ENCODE measurements at regions of chr20 and their contacts with region 1.

Region 1: GRCh38 chr20:59120491-59120890 is 43.1 kb upstream of the ZNF831 start:
- DNase-seq: peak in 6 of 9 experiments; percentile 16 to 82 (median 42)
- ATAC-seq: no peak
- H3K4me3 ChIP-seq: no peak overlapping the region
- H3K4me3 Mint-ChIP-seq: peak overlapping the region; percentile 61
- H3K27ac ChIP-seq: peak overlapping the region; percentile 77 to 87
- H3K27ac Mint-ChIP-seq: peak overlapping the region; percentile 98
- H3K4me1 ChIP-seq: peaks cover 84% of the 10 kb centered on the region
- H3K4me1 Mint-ChIP-seq: peaks cover 89% of the 10 kb centered on the region
- H3K27me3 ChIP-seq: no peaks in the 10 kb centered on the region
- H3K27me3 Mint-ChIP-seq: no peaks in the 10 kb centered on the region
- CTCF ChIP-seq: no peak

Region 2: GRCh38 chr20:58431134-58431533 is 689.4 kb before region 1 on chr20:
- CTCF ChIA-PET with region 1: no interaction called
- POLR2A ChIA-PET with region 1: no interaction called
- intact Hi-C with region 1: no loop called
- DNase-seq: no peak
- ATAC-seq: no peak
- H3K4me3 ChIP-seq: no peak overlapping the region
- H3K4me3 Mint-ChIP-seq: no peak overlapping the region
- H3K27ac ChIP-seq: no peak overlapping the region
- H3K27ac Mint-ChIP-seq: no peak overlapping the region
- H3K4me1 ChIP-seq: peaks cover 12% of the 10 kb centered on the region
- H3K4me1 Mint-ChIP-seq: peaks cover 44% of the 10 kb centered on the region
- H3K27me3 ChIP-seq: no peaks in the 10 kb centered on the region
- H3K27me3 Mint-ChIP-seq: no peaks in the 10 kb centered on the region
- CTCF ChIP-seq: no peak

Region 3: GRCh38 chr20:58584881-58585752 is 535.4 kb before region 1 on chr20:
- CTCF ChIA-PET with region 1: no interaction called
- POLR2A ChIA-PET with region 1: no interaction called
- intact Hi-C with region 1: no loop called
- DNase-seq: no peak
- ATAC-seq: no peak
- H3K4me3 ChIP-seq: no peak overlapping the region
- H3K4me3 Mint-ChIP-seq: no peak overlapping the region
- H3K27ac ChIP-seq: no peak overlapping the region
- H3K27ac Mint-ChIP-seq: no peak overlapping the region
- H3K4me1 ChIP-seq: no peaks in the 10 kb centered on the region
- H3K4me1 Mint-ChIP-seq: no peaks in the 10 kb centered on the region
- H3K27me3 ChIP-seq: no peaks in the 10 kb centered on the region
- H3K27me3 Mint-ChIP-seq: peaks cover 17% of the 10 kb centered on the region
- CTCF ChIP-seq: no peak

Region 4: DNA sequence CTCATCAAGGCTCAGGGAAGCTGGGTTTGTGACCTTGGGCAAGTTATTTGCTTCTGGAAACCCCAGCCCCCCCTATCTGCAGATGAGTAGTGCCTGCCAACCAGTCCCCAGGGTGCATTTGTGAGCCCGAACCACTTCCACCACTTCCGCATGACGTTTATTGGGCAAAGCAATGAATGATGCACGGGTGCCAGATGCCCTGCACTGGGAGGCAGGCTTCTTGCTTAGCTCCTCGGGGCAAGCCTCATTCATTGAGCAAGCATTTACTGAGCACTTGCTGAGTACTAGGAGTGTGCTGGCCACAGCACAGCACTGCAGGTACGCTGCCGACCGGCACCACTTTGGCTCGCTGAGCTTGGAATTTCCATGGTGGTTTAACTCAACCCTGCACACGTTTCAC is 330.0 kb before region 1 on chr20:
- CTCF ChIA-PET with region 1: no interaction called
- POLR2A ChIA-PET with region 1: no interaction called
- intact Hi-C with region 1: no loop called
- DNase-seq: peak in 1 of 9 experiments; percentile 7
- ATAC-seq: no peak
- H3K4me3 ChIP-seq: no peak overlapping the region
- H3K4me3 Mint-ChIP-seq: no peak overlapping the region
- H3K27ac ChIP-seq: no peak overlapping the region
- H3K27ac Mint-ChIP-seq: no peak overlapping the region
- H3K4me1 ChIP-seq: no peaks in the 10 kb centered on the region
- H3K4me1 Mint-ChIP-seq: no peaks in the 10 kb centered on the region
- H3K27me3 ChIP-seq: no peaks in the 10 kb centered on the region
- H3K27me3 Mint-ChIP-seq: peaks cover 6% of the 10 kb centered on the region
- CTCF ChIP-seq: no peak

Region 5: GRCh38 chr20:59141787-59142581 is 21.5 kb after region 1 on chr20:
- CTCF ChIA-PET with region 1: interaction called, 8 read pairs
- POLR2A ChIA-PET with region 1: interaction called, 32 read pairs
- intact Hi-C with region 1: loop called (anchors 1 to 2 kb)
- DNase-seq: peak in 1 of 9 experiments; percentile 30
- ATAC-seq: no peak
- H3K4me3 ChIP-seq: no peak overlapping the region
- H3K4me3 Mint-ChIP-seq: no peak overlapping the region
- H3K27ac ChIP-seq: no peak overlapping the region
- H3K27ac Mint-ChIP-seq: no peak overlapping the region
- H3K4me1 ChIP-seq: peaks cover 44% of the 10 kb centered on the region
- H3K4me1 Mint-ChIP-seq: peaks cover 57% of the 10 kb centered on the region
- H3K27me3 ChIP-seq: no peaks in the 10 kb centered on the region
- H3K27me3 Mint-ChIP-seq: no peaks in the 10 kb centered on the region
- CTCF ChIP-seq: no peak

Region 6: DNA sequence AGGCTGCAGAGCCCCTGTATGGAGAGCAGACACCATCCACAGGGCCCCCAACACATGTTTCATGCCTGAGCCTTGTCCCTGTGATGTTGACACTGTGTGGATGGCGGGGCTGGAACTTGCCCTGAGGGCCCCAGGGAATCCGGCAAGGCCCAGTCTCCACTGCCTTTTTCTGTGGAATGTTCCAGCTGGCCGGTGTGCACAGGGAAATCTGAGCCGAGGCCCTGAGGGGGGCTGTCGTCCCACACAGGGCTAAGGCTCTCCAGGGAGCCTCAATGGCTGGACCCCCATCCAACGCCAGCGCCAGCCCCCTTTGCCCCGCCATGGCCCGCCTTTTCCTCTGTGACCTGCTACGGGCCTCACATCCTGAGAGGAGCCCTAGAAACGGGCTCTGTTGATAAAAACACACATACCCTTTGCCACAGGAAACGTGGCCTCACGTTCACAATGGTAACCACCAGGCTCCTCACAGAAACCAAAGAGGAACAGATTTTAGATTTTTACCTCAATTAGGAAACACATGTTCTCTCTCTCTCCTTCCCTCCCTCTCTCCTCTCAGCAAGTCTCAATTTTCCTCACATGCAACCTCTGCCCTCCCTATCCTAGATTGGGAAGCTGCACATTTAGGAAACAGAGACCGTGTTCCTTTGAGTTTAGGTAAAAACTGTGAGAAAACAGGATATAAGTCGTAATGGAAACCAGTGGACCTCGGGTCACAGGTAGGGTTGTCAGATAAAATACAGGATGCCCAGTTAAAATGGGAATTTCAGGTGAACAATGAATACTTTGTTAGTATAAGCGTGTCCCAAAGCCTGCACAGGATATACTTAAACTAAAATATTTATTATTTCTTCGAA is 29.4 kb after region 1 on chr20:
- CTCF ChIA-PET with region 1: interaction called, 8 read pairs
- POLR2A ChIA-PET with region 1: interaction called, 32 read pairs
- intact Hi-C with region 1: loop called (anchors 1 to 2 kb)
- DNase-seq: peak; percentile 66 to 96 (median 77)
- ATAC-seq: peak; percentile 74
- H3K4me3 ChIP-seq: peak overlapping the region in 1 of 2 experiments; percentile 21
- H3K4me3 Mint-ChIP-seq: peak overlapping the region; percentile 71
- H3K27ac ChIP-seq: peak overlapping the region; percentile 90 to 94
- H3K27ac Mint-ChIP-seq: peak overlapping the region; percentile 95
- H3K4me1 ChIP-seq: peaks cover 94% of the 10 kb centered on the region
- H3K4me1 Mint-ChIP-seq: peaks cover 94% of the 10 kb centered on the region
- H3K27me3 ChIP-seq: no peaks in the 10 kb centered on the region
- H3K27me3 Mint-ChIP-seq: no peaks in the 10 kb centered on the region
- CTCF ChIP-seq: no peak

Region 7: GRCh38 chr20:59159493-59160376 is 39.2 kb after region 1 on chr20:
- CTCF ChIA-PET with region 1: interaction called, 24 read pairs
- POLR2A ChIA-PET with region 1: interaction called, 33 read pairs
- intact Hi-C with region 1: loop called (anchors 1 to 2 kb)
- DNase-seq: peak; percentile 56 to 97 (median 79)
- ATAC-seq: peak; percentile 86
- H3K4me3 ChIP-seq: peak overlapping the region; percentile 47 to 67
- H3K4me3 Mint-ChIP-seq: peak overlapping the region; percentile 83
- H3K27ac ChIP-seq: peak overlapping the region; percentile 79 to 93
- H3K27ac Mint-ChIP-seq: peak overlapping the region; percentile 98
- H3K4me1 ChIP-seq: peaks cover 69% of the 10 kb centered on the region
- H3K4me1 Mint-ChIP-seq: peaks cover 91% of the 10 kb centered on the region
- H3K27me3 ChIP-seq: no peaks in the 10 kb centered on the region
- H3K27me3 Mint-ChIP-seq: no peaks in the 10 kb centered on the region
- CTCF ChIP-seq: peak; percentile 23

Region 8: GRCh38 chr20:59177261-59178250 is 57.1 kb after region 1 on chr20:
- CTCF ChIA-PET with region 1: no interaction called
- POLR2A ChIA-PET with region 1: interaction called, 14 read pairs
- intact Hi-C with region 1: no loop called
- DNase-seq: peak in 5 of 9 experiments; percentile 46 to 83 (median 55)
- ATAC-seq: peak; percentile 76
- H3K4me3 ChIP-seq: peak overlapping the region in 1 of 2 experiments; percentile 26
- H3K4me3 Mint-ChIP-seq: peak overlapping the region; percentile 69
- H3K27ac ChIP-seq: peak overlapping the region; percentile 64 to 92
- H3K27ac Mint-ChIP-seq: peak overlapping the region; percentile 94
- H3K4me1 ChIP-seq: peaks cover 75% of the 10 kb centered on the region
- H3K4me1 Mint-ChIP-seq: peaks cover 94% of the 10 kb centered on the region
- H3K27me3 ChIP-seq: no peaks in the 10 kb centered on the region
- H3K27me3 Mint-ChIP-seq: no peaks in the 10 kb centered on the region
- CTCF ChIP-seq: no peak

Region 9: DNA sequence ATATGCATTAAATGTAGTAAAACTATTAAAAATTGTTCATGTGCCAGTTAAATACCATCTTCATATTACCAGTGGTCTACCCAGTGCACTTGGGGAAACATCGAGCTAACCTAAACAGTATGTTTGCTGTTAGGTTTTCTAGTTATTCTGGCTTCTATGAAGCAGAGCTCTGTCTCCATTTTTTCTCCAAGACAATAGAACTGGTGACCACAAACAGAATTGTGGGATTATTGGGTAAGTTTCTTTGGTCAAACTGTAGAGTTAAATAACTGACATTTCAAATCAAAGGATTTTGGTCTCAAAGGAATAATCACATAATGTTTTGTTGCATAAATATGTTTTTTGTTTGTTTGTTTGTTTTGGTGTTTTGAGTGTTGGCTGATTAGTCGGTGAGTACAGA is 139.5 kb after region 1 on chr20:
- CTCF ChIA-PET with region 1: no interaction called
- POLR2A ChIA-PET with region 1: no interaction called
- intact Hi-C with region 1: no loop called
- DNase-seq: no peak
- ATAC-seq: no peak
- H3K4me3 ChIP-seq: no peak overlapping the region
- H3K4me3 Mint-ChIP-seq: no peak overlapping the region
- H3K27ac ChIP-seq: no peak overlapping the region
- H3K27ac Mint-ChIP-seq: no peak overlapping the region
- H3K4me1 ChIP-seq: peaks cover 19% of the 10 kb centered on the region
- H3K4me1 Mint-ChIP-seq: peaks cover 47% of the 10 kb centered on the region
- H3K27me3 ChIP-seq: no peaks in the 10 kb centered on the region
- H3K27me3 Mint-ChIP-seq: no peaks in the 10 kb centered on the region
- CTCF ChIP-seq: no peak

Measured in CD8-positive, alpha-beta T cell (primary cell).